Esophagus squamous epithelium (tissue), 5 donors: ENCODE measurements at regions of chr11 and their contacts with region 1.

Region 1: GRCh38 chr11:19903620-19904069 is 191.0 kb downstream of the NAV2 start:
- DNase-seq: no peak
- H3K4me3 ChIP-seq: no peak overlapping the region
- H3K27ac ChIP-seq: no peak overlapping the region
- H3K4me1 ChIP-seq: no peaks in the 10 kb centered on the region
- H3K27me3 ChIP-seq: no peaks in the 10 kb centered on the region
- CTCF ChIP-seq: peak; percentile 21 to 79 (median 70)
- POLR2A ChIP-seq: no peak

Region 2: GRCh38 chr11:19561011-19561410 is 342.6 kb before region 1 on chr11:
- intact Hi-C with region 1: loop called (anchors 5 kb)
- DNase-seq: no peak
- H3K4me3 ChIP-seq: no peak overlapping the region
- H3K27ac ChIP-seq: no peak overlapping the region
- H3K4me1 ChIP-seq: peaks cover 0 to 14% (median 6%) of the 10 kb centered on the region in 3 donors
- H3K27me3 ChIP-seq: peaks cover 0 to 8% (median 0%) of the 10 kb centered on the region in 4 donors
- CTCF ChIP-seq: no peak
- POLR2A ChIP-seq: no peak

Region 3: DNA sequence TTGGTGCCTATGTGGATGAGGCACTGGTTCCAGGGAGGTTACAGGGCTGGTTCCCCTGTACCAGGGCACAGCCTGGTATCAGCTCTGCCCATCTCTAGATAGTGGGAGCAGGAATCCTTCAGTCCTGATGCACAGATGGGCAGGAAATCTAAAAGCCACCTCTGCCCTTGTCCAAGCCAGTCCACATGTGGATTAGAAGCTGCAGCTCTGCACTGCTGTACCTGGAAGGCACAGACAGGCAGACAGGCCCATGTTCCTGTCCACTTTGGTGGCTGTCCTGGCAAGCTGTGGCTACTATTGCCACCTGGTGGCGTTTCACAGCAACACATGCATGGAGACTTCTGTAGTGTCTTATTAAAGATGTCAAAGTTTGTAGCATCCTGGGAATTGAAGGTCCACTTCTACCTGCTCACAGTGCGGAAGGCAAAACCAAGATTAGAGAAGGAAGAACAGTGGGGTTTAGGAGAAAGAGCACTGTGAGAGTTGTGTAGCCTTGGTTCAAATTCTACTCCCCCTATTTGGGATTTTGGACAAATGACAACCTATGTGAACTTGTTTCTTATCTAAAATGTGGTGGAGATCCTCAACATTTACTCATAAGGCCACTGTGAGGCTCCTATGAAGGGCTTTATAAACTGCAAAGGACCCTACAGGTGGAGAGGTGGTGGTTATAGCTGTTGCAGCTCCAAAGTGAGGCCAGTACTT is 160.9 kb before region 1 on chr11:
- intact Hi-C with region 1: loop called (anchors 10 kb)
- DNase-seq: no peak
- H3K4me3 ChIP-seq: no peak overlapping the region
- H3K27ac ChIP-seq: no peak overlapping the region
- H3K4me1 ChIP-seq: peaks cover 0 to 15% (median 4%) of the 10 kb centered on the region in 3 donors
- H3K27me3 ChIP-seq: no peaks in the 10 kb centered on the region
- CTCF ChIP-seq: peak; percentile 79 to 97 (median 94)
- POLR2A ChIP-seq: no peak

Region 4: GRCh38 chr11:19814421-19814820 is 89.2 kb before region 1 on chr11:
- intact Hi-C with region 1: loop called (anchors 10 kb)
- DNase-seq: no peak
- H3K4me3 ChIP-seq: no peak overlapping the region
- H3K27ac ChIP-seq: no peak overlapping the region
- H3K4me1 ChIP-seq: peaks cover 0 to 17% (median 0%) of the 10 kb centered on the region in 3 donors
- H3K27me3 ChIP-seq: no peaks in the 10 kb centered on the region
- CTCF ChIP-seq: peak in 1 of 6 experiments; percentile 17
- POLR2A ChIP-seq: no peak